ENCODE measurements at regions of chr2 and their contacts with region 1.

Region 1: GRCh38 chr2:229431327-229431954 is 160.4 kb upstream of the PID1 start:
- DNase-seq: peak; percentile 57
- ATAC-seq: no peak
- H3K4me3 ChIP-seq: no peak overlapping the region
- H3K27ac ChIP-seq: no peak overlapping the region
- H3K4me1 ChIP-seq: no peaks in the 10 kb centered on the region
- H3K27me3 ChIP-seq: no peaks in the 10 kb centered on the region
- CTCF ChIP-seq: peak; percentile 47
- POLR2A ChIP-seq: no peak
- RAD21 ChIP-seq: peak; percentile 39

Region 2: GRCh38 chr2:229714736-229715541 is 283.5 kb after region 1 on chr2:
- CTCF ChIA-PET with region 1: no interaction called
- POLR2A ChIA-PET with region 1: no interaction called
- dilution Hi-C with region 1: no loop called
- in situ Hi-C with region 1: no loop called
- intact Hi-C with region 1: loop called (anchors 5 kb)
- DNase-seq: peak; percentile 55
- ATAC-seq: peak; percentile 92
- H3K4me3 ChIP-seq: peak overlapping the region; percentile 21
- H3K27ac ChIP-seq: no peak overlapping the region
- H3K4me1 ChIP-seq: peaks cover 2% of the 10 kb centered on the region; the same call in 1 of the 2 replicates
- H3K27me3 ChIP-seq: peaks cover 36% of the 10 kb centered on the region
- CTCF ChIP-seq: no peak
- POLR2A ChIP-seq: no peak
- RAD21 ChIP-seq: no peak

Region 3: GRCh38 chr2:230394301-230394700 is 962.9 kb after region 1 on chr2:
- CTCF ChIA-PET with region 1: no interaction called
- POLR2A ChIA-PET with region 1: no interaction called
- dilution Hi-C with region 1: no loop called
- in situ Hi-C with region 1: no loop called
- intact Hi-C with region 1: no loop called
- DNase-seq: no peak
- ATAC-seq: no peak
- H3K4me3 ChIP-seq: no peak overlapping the region
- H3K27ac ChIP-seq: no peak overlapping the region
- H3K4me1 ChIP-seq: no peaks in the 10 kb centered on the region
- H3K27me3 ChIP-seq: no peaks in the 10 kb centered on the region
- CTCF ChIP-seq: no peak
- POLR2A ChIP-seq: no peak
- RAD21 ChIP-seq: no peak

Measured in IMR-90 (cell line).